Mammary epithelial cell (primary cell): ENCODE measurements at regions of chr3 and their contacts with region 1.

Region 1: GRCh38 chr3:113287803-113288648 is 76.7 kb downstream of the BOC start:
- DNase-seq: peak; percentile 44
- H3K4me3 ChIP-seq: no peak overlapping the region
- H3K27ac ChIP-seq: peak overlapping the region; percentile 56
- H3K4me1 ChIP-seq: peaks cover 29% of the 10 kb centered on the region
- H3K27me3 ChIP-seq: no peaks in the 10 kb centered on the region
- CTCF ChIP-seq: peak; percentile 100

Region 2: DNA sequence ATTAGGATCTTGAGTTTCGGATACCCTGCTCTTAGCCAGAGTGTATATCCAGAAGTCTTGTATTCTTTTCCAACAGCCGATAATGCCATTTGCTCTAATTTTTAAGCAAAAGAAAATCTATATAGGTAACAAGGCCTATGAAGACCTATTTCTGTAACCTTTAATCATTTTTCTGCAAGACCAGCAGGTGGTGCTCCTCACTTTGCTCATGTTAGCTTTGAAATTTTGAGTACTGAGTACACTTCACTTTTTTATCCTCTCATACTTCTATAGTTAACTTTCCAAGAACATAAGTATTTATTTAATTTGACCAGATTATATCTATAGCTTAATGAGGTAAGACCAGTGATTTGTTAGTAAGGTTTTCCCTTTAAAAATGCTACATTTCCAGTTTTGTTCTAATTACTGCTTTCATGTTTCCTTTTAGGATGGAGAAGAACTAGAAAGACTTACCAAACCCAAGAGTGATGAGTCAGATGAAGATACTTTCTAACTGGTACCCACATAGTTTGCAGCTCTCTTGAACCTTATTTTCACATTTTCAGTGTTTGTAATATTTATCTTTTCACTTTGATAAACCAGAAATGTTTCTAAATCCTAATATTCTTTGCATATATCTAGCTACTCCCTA is 705.7 kb before region 1 on chr3:
- CTCF ChIA-PET with region 1: no interaction called
- dilution Hi-C with region 1: no loop called
- in situ Hi-C with region 1: no loop called
- intact Hi-C with region 1: loop called (anchors 1 kb)
- DNase-seq: peak; percentile 29
- H3K4me3 ChIP-seq: no peak overlapping the region
- H3K27ac ChIP-seq: no peak overlapping the region
- H3K4me1 ChIP-seq: no peaks in the 10 kb centered on the region
- H3K27me3 ChIP-seq: no peaks in the 10 kb centered on the region
- CTCF ChIP-seq: peak; percentile 50 to 68

Region 3: DNA sequence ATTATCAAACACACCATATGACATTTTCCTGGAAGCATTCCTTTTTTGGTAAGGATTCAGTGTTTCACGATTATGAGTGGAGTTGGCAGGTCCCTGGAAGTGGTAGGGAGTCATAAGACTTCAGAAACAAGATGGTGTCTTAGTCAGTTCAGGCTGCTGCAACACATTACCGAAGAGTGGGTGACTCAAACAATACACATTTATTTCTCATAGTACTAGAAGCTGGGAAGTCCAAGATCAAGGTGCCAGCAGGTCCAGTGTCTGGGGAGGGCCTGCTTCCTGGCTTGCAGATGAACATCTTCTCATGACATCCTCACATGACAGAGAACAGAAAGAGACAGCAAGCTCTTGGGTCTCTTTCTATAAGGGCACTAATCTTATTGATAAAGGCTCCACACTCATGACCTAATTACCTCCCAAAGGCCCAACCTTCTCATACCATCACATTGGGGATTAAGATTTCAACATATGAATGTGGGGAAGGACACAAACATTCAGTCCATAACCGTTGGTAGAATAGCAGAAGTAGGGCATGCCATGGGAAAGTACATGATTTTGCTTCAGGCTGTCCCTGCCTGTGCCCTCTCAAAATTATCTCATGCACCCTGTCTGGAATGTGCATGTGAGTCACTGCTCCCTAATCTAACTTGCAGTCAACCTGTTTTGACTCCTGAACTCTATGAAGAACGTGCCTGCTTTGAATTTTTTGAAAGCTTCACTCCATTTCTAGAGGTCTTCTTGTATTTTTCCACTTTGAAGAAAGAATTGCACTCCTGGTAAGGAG is 224.7 kb before region 1 on chr3:
- CTCF ChIA-PET with region 1: no interaction called
- dilution Hi-C with region 1: loop called (anchors 5 kb)
- in situ Hi-C with region 1: loop called in 1 of 2 experiments (anchors 10 kb)
- intact Hi-C with region 1: no loop called
- DNase-seq: peak; percentile 48
- H3K4me3 ChIP-seq: no peak overlapping the region
- H3K27ac ChIP-seq: no peak overlapping the region
- H3K4me1 ChIP-seq: peaks cover 6% of the 10 kb centered on the region
- H3K27me3 ChIP-seq: no peaks in the 10 kb centered on the region
- CTCF ChIP-seq: no peak

Region 4: DNA sequence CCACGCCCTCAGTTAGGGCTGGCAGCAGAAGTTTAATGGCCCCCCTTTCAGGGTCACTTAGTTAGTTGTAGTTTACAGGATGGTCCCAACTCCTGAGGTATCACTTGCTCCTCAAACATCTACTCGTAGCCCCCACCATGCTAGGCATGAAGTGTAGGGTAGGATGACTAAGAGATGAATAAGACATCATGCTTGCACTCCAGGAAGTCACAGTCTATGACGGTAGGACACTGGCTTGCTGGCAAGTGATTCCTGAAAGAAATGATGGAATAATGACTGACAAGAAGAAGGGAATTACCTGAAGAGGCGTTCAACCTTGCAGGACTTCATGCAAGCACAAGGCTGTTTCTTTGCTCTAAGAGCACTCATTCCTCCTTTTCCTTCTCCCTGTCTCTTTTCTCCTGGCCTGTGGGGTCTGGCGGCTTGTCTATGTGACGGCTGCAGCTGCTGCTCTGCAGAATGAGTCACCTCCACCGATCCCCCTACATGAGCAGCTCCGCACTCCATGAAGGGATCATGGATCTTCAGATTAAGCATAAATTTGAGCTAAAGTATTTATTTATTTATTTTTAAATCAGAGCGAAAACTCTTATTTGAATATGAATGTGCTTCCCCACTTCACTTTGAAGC is 159.5 kb before region 1 on chr3:
- CTCF ChIA-PET with region 1: no interaction called
- dilution Hi-C with region 1: no loop called
- in situ Hi-C with region 1: loop called in 1 of 2 experiments (anchors 5 kb)
- intact Hi-C with region 1: no loop called
- DNase-seq: no peak
- H3K4me3 ChIP-seq: no peak overlapping the region
- H3K27ac ChIP-seq: no peak overlapping the region
- H3K4me1 ChIP-seq: peaks cover 8% of the 10 kb centered on the region
- H3K27me3 ChIP-seq: no peaks in the 10 kb centered on the region
- CTCF ChIP-seq: no peak

Region 5: DNA sequence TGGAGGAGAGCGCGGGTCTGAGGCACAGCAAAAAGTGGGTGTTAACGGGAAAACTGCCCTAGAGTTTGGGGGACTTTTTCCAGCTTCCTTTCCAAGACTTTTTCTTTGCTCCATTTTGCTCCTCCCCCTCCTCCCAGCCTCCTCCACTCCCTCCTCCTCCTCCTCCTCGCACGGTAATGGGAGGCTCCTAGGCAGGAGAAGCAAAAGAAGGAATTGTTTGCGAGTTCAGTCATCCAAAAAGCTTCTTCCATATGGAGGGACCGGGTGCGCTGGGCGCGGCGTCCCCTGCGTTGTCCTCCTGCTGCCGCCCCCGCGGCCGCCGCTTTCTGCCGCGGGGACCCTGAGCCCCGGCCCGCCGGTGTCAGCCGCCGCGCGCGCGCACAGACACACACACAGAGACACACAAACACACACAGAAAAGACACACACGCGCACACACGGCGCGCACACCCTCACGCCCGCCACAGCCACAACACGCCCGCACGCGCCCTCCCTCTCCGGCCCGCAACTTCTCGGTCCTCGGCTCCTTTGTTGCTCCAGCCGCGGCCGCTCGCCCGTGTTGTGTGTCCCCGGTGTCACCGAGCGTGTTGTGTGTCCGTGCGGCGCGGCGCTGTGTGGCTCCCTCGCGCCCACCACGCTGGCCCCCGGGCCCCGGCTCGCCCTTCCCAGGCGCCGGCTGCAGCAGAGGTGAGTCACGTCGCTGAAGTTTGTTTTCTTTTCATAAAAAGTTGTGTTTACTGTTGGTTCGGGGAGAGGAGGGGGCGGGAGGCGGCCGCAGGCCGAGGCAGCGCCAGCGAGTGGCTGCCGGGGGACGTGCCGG is 76.5 kb before region 1 on chr3 and contains the start of gene BOC:
- CTCF ChIA-PET with region 1: no interaction called
- dilution Hi-C with region 1: no loop called
- in situ Hi-C with region 1: no loop called
- intact Hi-C with region 1: loop called (anchors 1 kb)
- DNase-seq: peak; percentile 57
- H3K4me3 ChIP-seq: peak within 1 kb of the TSS; percentile 79 to 92 (median 80)
- H3K27ac ChIP-seq: peak within 1 kb of the TSS; percentile 40
- H3K4me1 ChIP-seq: peaks cover 15% of the 10 kb centered on the region
- H3K27me3 ChIP-seq: no peaks in the 10 kb centered on the region
- CTCF ChIP-seq: no peak
- total RNA-seq, gene BOC: 18.5 to 49.7 TPM

Region 6: GRCh38 chr3:113263020-113263419 is 25.0 kb before region 1 on chr3:
- CTCF ChIA-PET with region 1: interaction called, 3 read pairs
- dilution Hi-C with region 1: no loop called
- in situ Hi-C with region 1: no loop called
- intact Hi-C with region 1: loop called (anchors 1 kb)
- DNase-seq: peak; percentile 77
- H3K4me3 ChIP-seq: no peak overlapping the region
- H3K27ac ChIP-seq: peak overlapping the region; percentile 18
- H3K4me1 ChIP-seq: peaks cover 20% of the 10 kb centered on the region
- H3K27me3 ChIP-seq: no peaks in the 10 kb centered on the region
- CTCF ChIP-seq: no peak

Region 7: DNA sequence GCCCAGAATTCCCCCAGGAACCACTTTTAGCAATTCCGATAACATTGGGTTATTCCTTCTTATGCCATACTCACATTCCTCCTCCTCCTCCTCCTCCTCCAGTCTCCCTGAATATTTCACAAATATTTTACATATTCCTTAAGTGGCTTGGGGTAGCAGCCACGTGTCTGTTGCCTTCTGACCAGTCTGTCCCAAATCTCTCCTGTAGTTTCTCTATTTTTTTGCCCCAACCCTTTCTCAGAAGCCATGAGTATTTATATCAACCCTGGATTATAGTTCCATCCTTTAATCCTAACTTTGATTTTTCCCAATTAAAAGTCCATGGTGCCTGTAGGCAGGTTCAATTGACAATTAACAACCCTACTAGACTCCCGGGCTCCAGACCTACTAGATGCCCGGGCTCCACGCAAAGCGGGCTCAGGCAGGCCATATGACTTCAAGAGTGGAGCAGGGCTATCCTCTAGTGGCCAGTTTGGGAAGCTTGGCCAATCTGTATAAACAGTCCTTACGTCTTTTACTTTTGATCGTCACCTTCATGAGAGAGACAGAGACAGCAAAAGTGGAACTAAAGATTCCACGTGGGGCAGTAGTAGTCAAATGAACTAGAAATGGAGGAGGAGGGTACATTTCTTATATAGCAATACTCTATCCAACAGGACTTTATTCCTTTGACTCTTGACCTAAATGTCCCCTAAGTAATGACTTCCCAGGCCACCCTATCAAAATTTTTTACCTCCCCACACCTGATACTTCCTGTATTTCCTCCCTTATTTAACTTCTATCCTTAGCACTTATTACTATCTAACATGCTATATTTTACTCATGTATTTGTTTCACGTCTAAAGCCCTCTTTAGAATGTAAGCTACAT is 338.7 kb after region 1 on chr3:
- CTCF ChIA-PET with region 1: no interaction called
- dilution Hi-C with region 1: no loop called
- in situ Hi-C with region 1: no loop called
- intact Hi-C with region 1: loop called (anchors 2 kb)
- DNase-seq: peak; percentile 55
- H3K4me3 ChIP-seq: no peak overlapping the region
- H3K27ac ChIP-seq: no peak overlapping the region
- H3K4me1 ChIP-seq: no peaks in the 10 kb centered on the region
- H3K27me3 ChIP-seq: no peaks in the 10 kb centered on the region
- CTCF ChIP-seq: peak; percentile 94 to 99